ENCODE measurements at regions of chr16 and their contacts with region 1.

Region 1: GRCh38 chr16:22232277-22233042 is 26.4 kb downstream of the EEF2K start:
- DNase-seq: no peak
- H3K4me3 ChIP-seq: no peak overlapping the region
- H3K27me3 ChIP-seq: no peaks in the 10 kb centered on the region
- CTCF ChIP-seq: no peak

Region 2: DNA sequence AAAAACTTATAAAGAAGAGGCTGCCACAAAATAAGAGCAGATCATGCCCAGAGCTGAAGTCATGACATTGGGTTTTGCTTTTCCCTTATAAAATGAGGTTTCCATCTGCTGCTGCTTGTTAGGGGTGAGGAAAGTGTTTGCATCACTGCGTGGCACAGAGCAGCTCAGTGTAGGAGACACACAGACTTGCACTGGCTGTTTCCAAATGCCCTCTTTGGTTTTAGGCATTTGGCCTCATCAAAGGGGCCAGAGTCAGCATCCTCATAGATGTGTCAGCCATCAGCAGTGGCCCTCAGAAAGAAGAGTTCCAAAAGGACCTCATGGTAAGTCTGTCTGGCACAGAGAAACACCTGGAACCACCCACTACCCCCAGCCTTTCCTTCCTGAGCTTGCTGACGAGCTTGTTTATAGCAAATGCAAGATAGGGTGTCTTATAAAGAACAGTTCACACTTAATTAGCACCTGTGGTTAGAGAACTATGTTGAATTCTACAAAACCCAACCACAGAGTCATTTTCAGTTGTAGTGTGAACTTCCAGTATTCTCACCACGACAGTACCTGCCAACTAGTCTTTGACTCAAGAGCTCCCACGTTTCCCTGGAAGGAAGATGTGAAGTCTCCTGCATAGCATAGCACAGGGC is 123.1 kb before region 1 on chr16:
- CTCF ChIA-PET with region 1: no interaction called
- POLR2A ChIA-PET with region 1: no interaction called
- DNase-seq: no peak
- H3K4me3 ChIP-seq: no peak overlapping the region
- H3K27me3 ChIP-seq: peaks cover 10% of the 10 kb centered on the region
- CTCF ChIP-seq: no peak

Region 3: DNA sequence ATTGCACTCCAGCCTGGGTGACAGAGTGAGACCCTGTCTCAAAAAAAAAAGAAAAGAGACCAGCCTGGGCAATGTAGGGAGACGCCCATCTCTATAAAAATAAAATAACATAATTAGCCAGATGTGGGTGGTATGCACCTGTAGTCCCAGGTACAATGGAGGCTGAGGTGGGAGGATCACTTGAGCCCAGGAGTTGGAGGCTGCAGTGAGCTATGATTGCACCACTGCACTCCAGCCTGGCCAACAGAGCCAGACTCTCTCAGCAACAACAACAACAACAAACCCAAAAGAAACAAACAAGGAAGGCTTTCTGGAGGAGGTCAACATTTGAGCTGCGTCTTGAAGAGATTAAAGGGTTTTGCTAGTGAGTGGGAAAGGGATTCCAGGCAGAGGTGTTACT is 18.1 kb before region 1 on chr16:
- CTCF ChIA-PET with region 1: no interaction called
- POLR2A ChIA-PET with region 1: no interaction called
- DNase-seq: no peak
- H3K4me3 ChIP-seq: no peak overlapping the region
- H3K27me3 ChIP-seq: no peaks in the 10 kb centered on the region
- CTCF ChIP-seq: no peak

Region 4: DNA sequence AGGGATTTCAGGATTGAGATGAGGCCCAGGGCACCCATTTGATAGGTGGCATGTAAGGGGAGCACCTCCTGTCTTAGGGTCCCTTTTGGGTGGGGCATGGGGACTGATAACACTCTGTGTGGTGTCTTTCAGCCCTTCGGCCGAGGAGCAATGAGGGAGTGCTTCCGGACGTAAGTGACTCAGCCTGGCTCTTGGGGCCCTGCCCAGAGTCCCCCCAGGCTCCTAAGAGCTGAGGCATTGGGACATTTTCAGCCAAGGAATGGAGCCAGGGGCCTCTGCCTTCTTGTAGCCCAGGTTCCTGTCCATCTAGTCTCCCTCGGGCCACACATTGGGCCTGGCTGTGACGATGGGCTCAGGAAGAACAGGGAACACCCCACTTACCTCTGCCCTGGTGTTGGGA is 18.1 kb after region 1 on chr16:
- CTCF ChIA-PET with region 1: no interaction called
- POLR2A ChIA-PET with region 1: no interaction called
- DNase-seq: no peak
- H3K4me3 ChIP-seq: no peak overlapping the region
- H3K27me3 ChIP-seq: no peaks in the 10 kb centered on the region
- CTCF ChIP-seq: no peak

Region 5: DNA sequence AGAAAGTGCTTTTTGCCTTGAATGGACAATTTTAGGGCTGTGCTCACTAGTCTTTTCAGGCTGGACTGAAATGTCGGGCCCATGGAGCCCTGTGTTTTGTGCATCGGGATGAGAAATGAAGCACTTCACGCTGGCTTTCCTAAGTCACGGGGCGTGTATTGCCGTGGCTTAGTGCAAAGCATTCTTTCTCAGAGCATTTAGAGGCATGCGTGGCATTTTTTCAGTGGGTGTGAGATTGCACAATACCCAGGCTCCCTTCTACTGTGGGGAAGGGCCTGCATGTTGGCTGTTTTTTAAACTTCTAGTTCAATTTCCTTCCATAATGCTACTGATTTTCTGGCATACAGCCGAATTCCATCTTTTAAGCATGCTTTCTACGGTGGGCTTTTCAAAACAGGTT is 52.2 kb after region 1 on chr16:
- CTCF ChIA-PET with region 1: no interaction called
- POLR2A ChIA-PET with region 1: interaction called, 19 read pairs
- DNase-seq: no peak
- H3K4me3 ChIP-seq: no peak overlapping the region
- H3K27me3 ChIP-seq: no peaks in the 10 kb centered on the region
- CTCF ChIP-seq: no peak

Region 6: DNA sequence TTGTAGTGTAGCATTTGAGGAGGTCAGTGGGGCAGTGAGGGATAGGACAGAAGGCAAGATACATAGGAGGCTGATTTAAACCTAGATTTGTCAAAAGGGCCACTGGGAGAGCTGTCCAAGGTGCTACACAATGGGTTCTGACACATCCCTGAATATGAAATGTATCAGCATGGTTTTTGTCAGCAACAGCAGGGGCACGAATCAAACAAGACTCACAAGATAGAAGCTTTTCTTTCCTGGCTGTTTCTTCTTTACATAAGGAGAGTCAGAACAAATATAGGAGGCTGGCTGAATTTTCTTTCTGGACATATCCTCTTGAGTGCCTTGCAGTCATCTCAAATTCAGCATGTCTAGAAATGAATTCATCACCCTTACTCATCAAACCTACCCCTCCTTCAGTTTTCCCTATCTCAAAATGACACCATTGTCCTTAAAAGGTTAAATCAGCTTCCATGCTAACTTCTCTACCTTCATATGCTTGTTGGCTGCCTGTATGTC is 408.7 kb after region 1 on chr16:
- CTCF ChIA-PET with region 1: no interaction called
- POLR2A ChIA-PET with region 1: no interaction called
- DNase-seq: no peak
- H3K4me3 ChIP-seq: no peak overlapping the region
- H3K27me3 ChIP-seq: peaks cover 8% of the 10 kb centered on the region
- CTCF ChIP-seq: no peak